Right ventricle myocardium inferior (tissue), 1 donor: ENCODE measurements at regions of chr16 and their contacts with region 1.

Region 1: DNA sequence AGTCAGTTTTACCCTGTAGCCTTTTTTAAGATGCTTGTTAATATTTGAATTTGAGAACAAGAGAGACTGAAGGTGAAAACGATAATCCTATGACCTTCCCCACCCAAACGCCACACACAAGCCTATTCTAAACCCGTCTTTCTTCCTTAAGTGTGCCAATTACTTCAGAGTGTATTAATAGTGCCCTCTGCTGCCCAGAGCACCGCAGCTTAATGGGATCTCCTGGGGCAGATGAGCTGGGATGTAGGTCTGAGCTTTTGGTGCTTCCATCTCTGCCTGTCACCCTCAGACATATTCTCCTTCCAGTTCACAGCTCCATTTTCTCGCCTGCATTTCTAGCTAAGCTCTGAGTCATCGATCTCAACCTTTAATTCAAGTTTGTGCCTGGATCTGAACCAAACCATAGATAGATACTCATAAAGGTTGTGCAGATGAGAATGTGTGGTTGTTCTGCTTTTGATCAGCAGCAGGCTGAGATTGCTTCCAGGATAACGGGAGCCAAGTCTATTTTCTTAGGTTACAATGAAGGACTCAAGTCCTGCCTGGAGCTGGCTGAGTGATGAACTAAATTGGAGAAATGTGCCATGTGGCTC is 46.4 kb upstream of the CDH13 start:
- DNase-seq: no peak
- ATAC-seq: peak; percentile 57

Region 2: DNA sequence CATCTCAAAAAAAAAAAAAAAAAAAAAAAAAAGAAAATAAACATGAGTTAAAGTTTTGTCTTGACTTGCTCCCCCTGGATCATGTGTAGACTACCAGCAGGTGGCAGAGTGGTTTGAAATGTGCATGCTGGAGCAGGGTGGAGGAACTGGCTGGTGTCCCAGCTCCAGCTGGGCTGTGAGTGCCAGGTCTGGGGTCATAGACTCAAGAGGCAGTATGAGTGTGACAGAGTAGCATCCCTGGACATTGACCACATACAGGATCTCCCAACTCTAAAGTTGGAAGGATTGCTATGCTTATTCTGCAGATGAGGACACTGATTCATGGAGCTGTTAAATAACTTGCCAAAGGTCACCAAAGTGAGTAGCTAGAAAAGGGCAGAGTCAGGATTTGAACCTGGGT is 212.4 kb before region 1 on chr16:
- intact Hi-C with region 1: loop called (anchors 5 kb)
- DNase-seq: peak; percentile 75
- ATAC-seq: peak; percentile 84

Region 3: DNA sequence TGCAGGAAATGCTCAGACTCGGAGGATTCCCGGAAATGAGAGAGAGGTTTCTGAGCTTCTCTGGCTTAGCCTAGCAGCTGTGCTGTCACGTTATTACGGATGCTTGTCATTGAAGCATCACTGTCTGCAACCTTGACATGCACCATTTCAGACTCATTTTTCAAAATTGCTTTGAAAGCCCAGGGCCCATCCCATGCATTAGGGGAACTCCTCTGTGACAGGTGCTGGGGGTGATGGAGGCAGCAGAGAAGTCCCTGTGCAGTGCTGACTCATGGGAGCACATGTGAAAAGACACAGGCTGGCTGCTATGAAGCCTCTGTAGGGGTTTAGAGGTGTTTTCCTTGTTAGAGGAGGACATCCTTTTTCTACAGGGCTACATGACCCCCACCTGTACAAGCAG is 196.4 kb before region 1 on chr16:
- intact Hi-C with region 1: no loop called
- DNase-seq: no peak
- ATAC-seq: no peak

Region 4: DNA sequence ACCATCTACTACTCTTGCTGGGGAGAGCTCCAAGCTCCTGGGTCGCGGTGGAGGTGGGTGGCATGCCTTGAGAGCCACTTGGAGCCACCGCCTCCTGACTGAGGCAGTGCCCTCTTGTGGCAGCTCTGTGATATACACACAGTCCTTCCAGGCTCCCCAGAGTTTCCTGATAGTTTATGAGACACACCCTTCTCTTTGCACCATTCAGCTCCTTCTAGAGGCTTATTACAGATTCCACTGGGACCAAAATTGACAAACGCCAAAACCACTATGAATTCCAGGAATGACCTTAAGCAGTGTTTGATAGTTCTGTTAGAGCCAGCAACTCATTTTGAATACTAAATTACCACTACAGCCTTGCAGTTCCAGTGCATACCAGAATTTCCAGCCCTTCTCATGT is 123.7 kb before region 1 on chr16:
- intact Hi-C with region 1: loop called (anchors 10 kb)
- DNase-seq: no peak
- ATAC-seq: no peak